PC-3 (cell line): ENCODE measurements at regions of chr5 and their contacts with region 1.

Region 1: DNA sequence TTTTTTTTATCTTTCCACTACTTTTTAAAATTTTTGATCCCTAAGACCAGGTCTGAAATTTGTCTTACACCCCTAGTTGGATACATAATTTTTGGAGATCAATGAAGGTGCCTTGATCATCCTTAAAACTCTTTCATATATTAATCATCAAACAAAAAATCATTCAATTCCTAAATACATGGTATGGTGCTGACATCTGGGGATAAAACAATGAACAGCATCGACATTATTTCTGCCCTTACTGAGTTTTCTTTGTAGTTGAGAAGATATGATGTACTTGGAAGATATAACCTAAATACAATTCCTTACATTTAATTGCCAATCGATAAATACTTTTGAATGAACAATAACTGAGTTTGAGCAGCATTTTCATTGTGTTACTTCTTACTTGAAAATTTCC is 18.3 kb downstream of the SPINK9 start:
- DNase-seq: peak; percentile 51
- ATAC-seq: peak; percentile 43; the same call in 1 of the 2 replicates
- H3K4me3 ChIP-seq: no peak overlapping the region
- H3K27ac ChIP-seq: no peak overlapping the region
- H3K4me1 ChIP-seq: peaks cover 10% of the 10 kb centered on the region
- H3K27me3 ChIP-seq: no peaks in the 10 kb centered on the region
- CTCF ChIP-seq: peak; percentile 68

Region 2: GRCh38 chr5:148120317-148120716 is 233.3 kb before region 1 on chr5:
- CTCF ChIA-PET with region 1: no interaction called
- POLR2A ChIA-PET with region 1: no interaction called
- intact Hi-C with region 1: loop called (anchors 5 kb)
- DNase-seq: peak; percentile 50
- ATAC-seq: peak; percentile 60
- H3K4me3 ChIP-seq: 0 out of 2 replicates have a peak overlapping the region, but pooled peaks have one; percentile 20
- H3K27ac ChIP-seq: no peak overlapping the region
- H3K4me1 ChIP-seq: peaks cover 6% of the 10 kb centered on the region
- H3K27me3 ChIP-seq: no peaks in the 10 kb centered on the region
- CTCF ChIP-seq: no peak

Region 3: GRCh38 chr5:148214665-148215185 is 138.9 kb before region 1 on chr5:
- CTCF ChIA-PET with region 1: no interaction called
- POLR2A ChIA-PET with region 1: no interaction called
- intact Hi-C with region 1: no loop called
- DNase-seq: peak; percentile 31
- ATAC-seq: peak; percentile 91
- H3K4me3 ChIP-seq: no peak overlapping the region
- H3K27ac ChIP-seq: peak overlapping the region; percentile 19; the same call in 1 of the 2 replicates
- H3K4me1 ChIP-seq: peaks cover 8% of the 10 kb centered on the region; the same call in 1 of the 2 replicates
- H3K27me3 ChIP-seq: no peaks in the 10 kb centered on the region
- CTCF ChIP-seq: no peak

Region 4: GRCh38 chr5:148290271-148291195 is 63.1 kb before region 1 on chr5:
- CTCF ChIA-PET with region 1: interaction called, 3 read pairs
- POLR2A ChIA-PET with region 1: no interaction called
- intact Hi-C with region 1: loop called (anchors 1 kb)
- DNase-seq: peak; percentile 66
- ATAC-seq: peak; percentile 90
- H3K4me3 ChIP-seq: no peak overlapping the region
- H3K27ac ChIP-seq: no peak overlapping the region
- H3K4me1 ChIP-seq: no peaks in the 10 kb centered on the region
- H3K27me3 ChIP-seq: no peaks in the 10 kb centered on the region
- CTCF ChIP-seq: peak; percentile 92

Region 5: GRCh38 chr5:148314204-148314603 is 39.4 kb before region 1 on chr5:
- CTCF ChIA-PET with region 1: interaction called, 5 read pairs
- POLR2A ChIA-PET with region 1: no interaction called
- intact Hi-C with region 1: loop called (anchors 1 kb)
- DNase-seq: peak; percentile 70
- ATAC-seq: peak; percentile 97
- H3K4me3 ChIP-seq: no peak overlapping the region
- H3K27ac ChIP-seq: no peak overlapping the region
- H3K4me1 ChIP-seq: peaks cover 10% of the 10 kb centered on the region; the same call in 1 of the 2 replicates
- H3K27me3 ChIP-seq: no peaks in the 10 kb centered on the region
- CTCF ChIP-seq: peak; percentile 64

Region 6: DNA sequence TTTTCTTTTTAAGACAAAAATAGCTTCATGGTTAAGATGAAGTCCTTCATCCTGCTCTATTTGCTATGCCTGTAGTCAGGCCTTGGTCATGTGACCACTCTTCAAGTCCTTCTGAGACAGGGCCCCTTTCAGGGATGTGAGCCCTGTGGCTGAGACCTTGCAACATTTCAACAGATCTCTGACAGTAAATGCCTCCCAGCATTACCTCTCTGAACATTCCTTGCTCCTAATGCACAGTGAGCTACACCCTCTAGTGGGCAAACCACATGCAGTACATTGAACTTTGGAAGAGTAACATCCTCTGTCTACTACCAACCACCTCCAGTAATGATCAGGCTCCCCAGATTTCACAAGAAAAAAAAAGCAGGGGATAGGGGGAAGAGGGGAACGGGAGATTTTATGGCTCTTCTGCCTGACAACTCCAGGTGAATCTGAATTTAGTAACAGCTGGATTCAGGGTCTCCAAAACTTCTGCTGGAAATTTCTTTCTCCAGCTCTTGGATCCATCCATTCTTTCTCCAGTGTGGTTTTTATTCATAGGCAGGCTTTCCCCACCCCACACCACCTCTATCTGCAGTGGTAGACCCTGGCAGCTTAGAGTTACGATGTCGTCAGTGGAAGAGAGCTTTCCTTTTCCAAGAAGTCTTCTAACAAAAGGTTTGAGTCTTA is 21.2 kb after region 1 on chr5:
- CTCF ChIA-PET with region 1: no interaction called
- POLR2A ChIA-PET with region 1: no interaction called
- intact Hi-C with region 1: loop called (anchors 1 kb)
- DNase-seq: peak; percentile 85
- ATAC-seq: peak; percentile 73
- H3K4me3 ChIP-seq: no peak overlapping the region
- H3K27ac ChIP-seq: no peak overlapping the region
- H3K4me1 ChIP-seq: peaks cover 14% of the 10 kb centered on the region
- H3K27me3 ChIP-seq: no peaks in the 10 kb centered on the region
- CTCF ChIP-seq: peak; percentile 98